Calu3 (cell line): ENCODE measurements at regions of chr4 and their contacts with region 1.

Region 1: GRCh38 chr4:79042079-79042674 is 102.9 kb upstream of the PAQR3 start:
- DNase-seq: peak; percentile 9
- H3K4me3 Mint-ChIP-seq: no peak overlapping the region
- H3K27ac Mint-ChIP-seq: no peak overlapping the region
- H3K4me1 Mint-ChIP-seq: peaks cover 8% of the 10 kb centered on the region
- H3K27me3 Mint-ChIP-seq: no peaks in the 10 kb centered on the region
- CTCF ChIP-seq: peak; percentile 28

Region 2: GRCh38 chr4:78667764-78668163 is 374.4 kb before region 1 on chr4:
- CTCF ChIA-PET with region 1: no interaction called
- intact Hi-C with region 1: no loop called
- DNase-seq: no peak
- H3K4me3 Mint-ChIP-seq: no peak overlapping the region
- H3K27ac Mint-ChIP-seq: no peak overlapping the region
- H3K4me1 Mint-ChIP-seq: no peaks in the 10 kb centered on the region
- H3K27me3 Mint-ChIP-seq: no peaks in the 10 kb centered on the region
- CTCF ChIP-seq: no peak

Region 3: DNA sequence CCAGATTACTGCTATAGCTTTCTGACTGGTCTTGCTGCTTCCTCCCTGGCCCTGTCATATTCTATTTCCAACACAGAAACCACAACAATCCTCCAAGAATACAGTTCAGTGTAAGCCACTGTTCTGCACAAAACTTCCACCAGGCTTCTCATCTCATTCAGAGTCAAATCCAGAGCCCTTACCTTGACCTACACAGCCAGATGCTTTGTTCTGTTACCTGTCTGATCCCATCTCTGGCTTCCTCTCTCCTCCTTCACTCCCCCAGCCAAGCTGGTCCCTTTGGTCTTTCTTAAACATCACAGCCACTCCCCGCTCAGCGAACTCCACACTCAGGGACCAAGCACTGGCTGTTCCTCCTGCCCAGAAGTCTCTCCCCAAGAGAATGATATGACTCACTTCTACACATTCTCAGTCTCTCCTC is 350.8 kb before region 1 on chr4:
- CTCF ChIA-PET with region 1: no interaction called
- intact Hi-C with region 1: no loop called
- DNase-seq: no peak
- H3K4me3 Mint-ChIP-seq: no peak overlapping the region
- H3K27ac Mint-ChIP-seq: no peak overlapping the region
- H3K4me1 Mint-ChIP-seq: no peaks in the 10 kb centered on the region
- H3K27me3 Mint-ChIP-seq: no peaks in the 10 kb centered on the region
- CTCF ChIP-seq: no peak

Region 4: GRCh38 chr4:79281566-79282359 is 239.6 kb after region 1 on chr4:
- CTCF ChIA-PET with region 1: no interaction called
- intact Hi-C with region 1: loop called (anchors 10 kb)
- DNase-seq: no peak
- H3K4me3 Mint-ChIP-seq: no peak overlapping the region
- H3K27ac Mint-ChIP-seq: no peak overlapping the region
- H3K4me1 Mint-ChIP-seq: no peaks in the 10 kb centered on the region
- H3K27me3 Mint-ChIP-seq: no peaks in the 10 kb centered on the region
- CTCF ChIP-seq: no peak

Region 5: DNA sequence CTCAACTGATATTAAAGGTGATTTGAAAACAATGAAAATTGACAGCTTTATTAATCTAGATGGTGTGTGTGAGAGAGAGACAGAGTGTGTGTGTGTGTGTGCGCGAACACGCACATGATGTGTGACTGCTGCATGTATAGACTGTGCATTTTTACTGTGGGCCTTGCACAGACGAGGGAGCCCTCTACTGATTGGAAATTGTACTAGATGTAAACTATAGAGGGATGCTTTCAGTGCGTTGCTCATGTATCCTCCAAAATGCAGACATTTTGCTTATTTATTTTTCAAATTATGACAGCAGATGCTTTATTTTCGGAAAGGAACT is 534.2 kb after region 1 on chr4:
- CTCF ChIA-PET with region 1: no interaction called
- intact Hi-C with region 1: loop called (anchors 1 kb)
- DNase-seq: peak; percentile 14
- H3K4me3 Mint-ChIP-seq: no peak overlapping the region
- H3K27ac Mint-ChIP-seq: no peak overlapping the region
- H3K4me1 Mint-ChIP-seq: no peaks in the 10 kb centered on the region
- H3K27me3 Mint-ChIP-seq: no peaks in the 10 kb centered on the region
- CTCF ChIP-seq: peak; percentile 25

Region 6: GRCh38 chr4:80215449-80216052 is 1173.4 kb after region 1 on chr4:
- CTCF ChIA-PET with region 1: no interaction called
- intact Hi-C with region 1: loop called (anchors 5 kb)
- DNase-seq: no peak
- H3K4me3 Mint-ChIP-seq: no peak overlapping the region
- H3K27ac Mint-ChIP-seq: no peak overlapping the region
- H3K4me1 Mint-ChIP-seq: peaks cover 8% of the 10 kb centered on the region
- H3K27me3 Mint-ChIP-seq: no peaks in the 10 kb centered on the region
- CTCF ChIP-seq: peak; percentile 15